ENCODE measurements at regions of chr11 and their contacts with region 1.

Region 1: DNA sequence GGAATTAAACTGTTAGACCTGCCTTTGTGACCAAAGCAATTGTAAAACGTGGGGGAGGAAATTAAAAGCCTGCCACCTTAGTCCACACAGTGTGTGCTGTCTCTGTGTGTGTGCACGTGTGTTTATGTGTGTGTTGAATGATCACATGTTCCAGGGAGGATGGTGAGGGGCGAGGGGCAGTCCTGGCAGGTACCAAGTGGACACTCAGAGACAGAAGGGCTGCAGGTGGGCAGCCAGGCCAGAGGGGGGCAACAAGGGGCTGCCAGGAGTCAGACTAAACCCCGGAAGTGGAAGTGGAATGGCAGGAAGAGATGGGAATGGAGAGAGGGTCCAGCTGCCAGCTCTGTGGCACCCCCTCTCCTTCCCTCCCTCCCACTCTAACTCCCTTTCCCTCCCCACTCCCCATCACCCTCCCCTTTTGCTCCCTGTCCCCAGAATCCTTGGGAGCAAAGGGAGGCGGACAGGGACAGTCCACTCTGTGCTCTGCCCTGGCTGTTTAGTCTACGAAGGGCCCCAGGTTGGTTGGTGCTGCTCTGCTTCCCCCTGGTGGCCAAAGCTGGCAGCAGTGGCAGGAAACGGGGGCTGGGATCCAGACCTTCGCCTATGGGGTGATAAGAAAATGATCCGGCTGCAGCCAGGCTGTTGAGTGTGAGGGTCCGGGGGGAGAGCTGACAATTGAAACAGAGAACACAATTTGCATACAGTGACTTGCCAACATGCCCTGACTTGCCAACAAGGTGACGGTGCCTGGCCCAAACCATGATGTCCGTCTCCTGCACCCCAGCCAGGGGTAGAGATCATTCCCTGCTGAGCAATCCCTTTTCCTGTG is 24.4 kb downstream of the P2RY2 start:
- DNase-seq: peak; percentile 72 to 85 (median 76)
- ATAC-seq: peak; percentile 95
- H3K4me3 ChIP-seq: no peak overlapping the region
- H3K4me1 ChIP-seq: no peaks in the 10 kb centered on the region
- CTCF ChIP-seq: peak; percentile 72

Region 2: DNA sequence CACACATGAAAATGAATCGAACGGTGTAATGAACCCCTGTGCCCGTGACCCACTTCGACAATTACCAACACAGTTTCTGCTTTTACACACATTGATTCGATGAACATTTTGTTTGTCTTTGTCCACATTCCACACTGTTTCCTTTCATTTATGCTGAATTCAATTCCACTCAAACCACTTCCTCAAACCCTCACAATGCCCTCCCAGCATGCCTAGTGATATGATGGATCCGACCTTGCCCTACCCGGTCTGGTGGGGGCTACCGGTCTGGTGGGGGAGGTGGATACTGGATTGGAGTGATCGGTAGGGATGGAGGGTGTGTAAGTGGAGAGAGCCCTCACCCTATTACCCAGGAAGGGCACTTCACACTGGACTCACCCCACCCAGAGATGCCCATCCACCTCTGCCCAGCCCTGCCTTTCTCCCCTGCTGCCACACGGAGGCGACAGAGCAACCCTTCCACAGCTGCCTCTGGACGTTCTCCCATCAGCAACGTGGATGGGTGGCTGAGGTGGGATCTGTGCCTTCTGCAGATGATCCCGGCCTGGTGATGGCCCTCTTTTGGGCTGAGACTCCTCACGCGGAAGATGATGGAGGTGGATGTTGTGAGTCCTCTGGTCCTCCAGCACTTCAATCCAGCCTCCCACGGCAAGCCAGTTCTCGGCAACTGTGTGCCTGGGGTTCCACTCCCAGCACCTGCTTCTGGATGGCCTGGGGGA is 57.4 kb before region 1 on chr11:
- intact Hi-C with region 1: loop called (anchors 10 kb)
- DNase-seq: peak; percentile 75 to 85 (median 80)
- ATAC-seq: peak; percentile 86
- H3K4me3 ChIP-seq: no peak overlapping the region
- H3K4me1 ChIP-seq: peaks cover 15% of the 10 kb centered on the region
- CTCF ChIP-seq: peak; percentile 74

Region 3: DNA sequence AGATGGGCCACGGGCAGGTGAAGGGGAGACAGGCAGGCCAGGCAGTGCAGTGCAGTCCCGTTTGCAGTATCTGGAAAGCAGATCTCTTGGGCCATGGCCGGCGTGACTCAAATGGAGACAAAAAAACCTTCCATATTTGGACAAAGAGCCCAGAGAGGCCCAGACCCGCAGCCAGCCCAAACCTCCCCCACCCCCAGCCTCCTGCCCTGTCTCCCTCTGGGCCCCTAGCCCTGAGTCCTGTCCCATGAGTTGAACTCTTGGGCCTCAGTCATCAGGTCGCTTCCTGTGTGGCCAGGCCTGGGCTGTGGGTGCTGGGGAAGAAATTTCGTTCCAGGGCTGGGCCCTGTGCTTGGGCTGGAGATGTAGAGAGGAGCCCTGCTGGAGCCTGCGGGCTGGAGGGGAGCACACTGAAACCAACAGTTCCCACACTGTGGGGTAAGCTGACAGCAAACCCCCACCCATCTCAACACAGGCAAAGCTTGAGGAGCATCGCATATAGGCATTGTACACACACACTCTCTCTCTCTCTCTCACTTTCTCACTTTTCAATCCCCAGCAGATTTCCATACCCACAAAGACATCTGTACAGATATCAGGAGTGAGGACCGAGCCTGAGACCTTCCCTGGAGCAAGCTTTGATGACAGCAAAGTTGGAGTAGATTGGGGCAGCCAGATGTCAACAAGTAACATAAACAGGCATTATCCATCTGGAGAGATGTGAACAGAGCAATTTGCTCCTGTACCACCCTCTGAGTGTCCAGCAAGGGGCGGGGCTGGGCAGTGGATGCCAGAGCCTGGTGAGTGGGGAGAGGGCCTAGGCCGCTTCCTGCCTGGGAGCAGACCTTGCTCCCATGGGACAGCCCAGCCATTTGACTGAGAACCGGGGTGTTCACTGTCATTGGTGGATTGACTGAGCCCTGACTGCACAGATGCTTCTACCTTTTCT is 82.8 kb after region 1 on chr11:
- intact Hi-C with region 1: no loop called
- DNase-seq: no peak
- ATAC-seq: peak; percentile 14
- H3K4me3 ChIP-seq: no peak overlapping the region
- H3K4me1 ChIP-seq: peaks cover 16% of the 10 kb centered on the region
- CTCF ChIP-seq: no peak

Measured in mucosa of descending colon (tissue), 3 donors.